Natural killer cell (primary cell): ENCODE measurements at regions of chr17 and their contacts with region 1.

Region 1: GRCh38 chr17:59329638-59330313 is 1.7 kb upstream of the YPEL2 start:
- DNase-seq: peak; percentile 27 to 80
- ATAC-seq: peak; percentile 65 to 80 (median 66)
- H3K4me3 ChIP-seq: no peak overlapping the region
- H3K4me3 Mint-ChIP-seq: peak overlapping the region; percentile 60
- H3K27ac ChIP-seq: peak overlapping the region; percentile 66
- H3K27ac Mint-ChIP-seq: peak overlapping the region; percentile 77 to 83
- H3K4me1 ChIP-seq: peaks cover 29% of the 10 kb centered on the region
- H3K4me1 Mint-ChIP-seq: peaks cover 32 to 42% of the 10 kb centered on the region in 2 donors
- H3K27me3 ChIP-seq: no peaks in the 10 kb centered on the region
- H3K27me3 Mint-ChIP-seq: no peaks in the 10 kb centered on the region
- CTCF ChIP-seq: peak; percentile 75

Region 2: DNA sequence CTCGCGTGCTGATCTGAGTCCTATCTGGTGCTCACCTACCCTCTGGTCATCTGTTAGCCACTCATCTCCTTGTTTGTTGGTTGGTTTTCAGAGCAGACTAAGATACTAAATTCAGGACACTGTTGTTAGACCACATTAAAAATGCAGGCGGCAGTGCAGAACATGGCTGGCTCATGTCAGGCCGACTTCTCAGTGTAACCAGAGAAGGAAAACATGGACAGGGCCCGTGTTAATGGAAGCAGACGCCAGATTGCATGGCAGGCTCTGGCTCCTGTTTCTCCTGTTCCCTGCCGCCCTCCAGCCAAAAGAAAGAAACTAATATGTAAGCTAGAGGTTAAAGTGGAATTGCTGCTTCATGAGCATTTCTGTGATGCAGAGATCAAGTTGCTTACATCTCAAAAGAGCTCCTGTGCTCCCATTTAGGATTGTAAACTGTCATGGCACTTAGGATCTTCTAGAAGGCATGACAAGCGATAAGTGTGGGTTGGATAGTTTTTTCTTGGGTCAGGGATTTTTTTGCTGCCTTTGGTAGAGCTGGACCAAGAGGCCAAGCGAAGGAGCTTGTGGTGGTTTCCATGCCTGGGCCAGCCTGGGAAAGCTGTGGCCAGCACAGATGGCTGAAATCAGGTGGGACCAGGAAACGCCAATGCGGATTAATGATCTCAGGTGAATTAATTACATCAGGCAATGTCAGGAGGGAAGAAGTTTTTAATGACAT is 57.7 kb after region 1 on chr17:
- intact Hi-C with region 1: no loop called
- DNase-seq: no peak
- ATAC-seq: no peak
- H3K4me3 ChIP-seq: no peak overlapping the region
- H3K4me3 Mint-ChIP-seq: no peak overlapping the region
- H3K27ac ChIP-seq: no peak overlapping the region
- H3K27ac Mint-ChIP-seq: no peak overlapping the region
- H3K4me1 ChIP-seq: no peaks in the 10 kb centered on the region
- H3K4me1 Mint-ChIP-seq: no peaks in the 10 kb centered on the region
- H3K27me3 ChIP-seq: no peaks in the 10 kb centered on the region
- H3K27me3 Mint-ChIP-seq: no peaks in the 10 kb centered on the region
- CTCF ChIP-seq: no peak

Region 3: DNA sequence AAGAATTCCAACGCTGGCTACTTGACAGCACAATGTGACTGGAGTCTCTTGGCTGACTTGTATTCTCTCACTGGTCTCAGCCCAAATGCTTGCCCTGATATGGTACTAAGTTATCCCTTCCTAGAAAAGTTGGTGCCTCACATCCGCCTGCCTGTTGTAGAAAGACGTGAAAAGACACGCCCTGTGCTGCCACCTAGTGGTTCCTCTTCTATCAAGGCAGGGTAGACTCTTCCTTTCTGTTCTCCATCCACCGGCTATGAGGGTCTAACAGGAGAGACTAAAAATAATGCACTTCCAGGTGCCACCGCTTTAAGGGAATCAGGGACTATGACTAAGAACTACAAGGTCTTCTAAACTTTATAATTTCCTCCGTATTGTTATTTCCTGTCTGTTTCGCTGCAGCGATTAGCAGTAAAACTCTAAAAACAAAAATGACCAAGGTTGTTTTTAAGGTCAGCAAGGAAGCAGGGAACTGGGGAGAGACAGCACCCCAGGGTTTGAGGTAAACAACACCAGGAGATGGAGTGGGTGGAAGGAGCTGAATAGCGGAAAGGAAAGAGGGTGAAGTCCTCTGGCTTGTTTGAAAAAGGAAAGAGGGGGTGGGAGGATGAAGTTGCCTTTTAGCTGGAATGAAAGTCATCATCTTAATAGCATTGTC is 111.1 kb after region 1 on chr17:
- intact Hi-C with region 1: loop called (anchors 1 kb)
- DNase-seq: peak; percentile 75 to 94
- ATAC-seq: peak; percentile 91 to 99 (median 98)
- H3K4me3 ChIP-seq: no peak overlapping the region
- H3K4me3 Mint-ChIP-seq: peak overlapping the region; percentile 29
- H3K27ac ChIP-seq: no peak overlapping the region
- H3K27ac Mint-ChIP-seq: peak overlapping the region in 1 of 2 donors; percentile 49
- H3K4me1 ChIP-seq: peaks cover 3% of the 10 kb centered on the region
- H3K4me1 Mint-ChIP-seq: peaks cover 7 to 8% of the 10 kb centered on the region in 2 donors
- H3K27me3 ChIP-seq: no peaks in the 10 kb centered on the region
- H3K27me3 Mint-ChIP-seq: peaks cover 9 to 15% of the 10 kb centered on the region in 2 donors
- CTCF ChIP-seq: peak; percentile 84